ENCODE measurements at regions of chr12 and their contacts with region 1.

Region 1: DNA sequence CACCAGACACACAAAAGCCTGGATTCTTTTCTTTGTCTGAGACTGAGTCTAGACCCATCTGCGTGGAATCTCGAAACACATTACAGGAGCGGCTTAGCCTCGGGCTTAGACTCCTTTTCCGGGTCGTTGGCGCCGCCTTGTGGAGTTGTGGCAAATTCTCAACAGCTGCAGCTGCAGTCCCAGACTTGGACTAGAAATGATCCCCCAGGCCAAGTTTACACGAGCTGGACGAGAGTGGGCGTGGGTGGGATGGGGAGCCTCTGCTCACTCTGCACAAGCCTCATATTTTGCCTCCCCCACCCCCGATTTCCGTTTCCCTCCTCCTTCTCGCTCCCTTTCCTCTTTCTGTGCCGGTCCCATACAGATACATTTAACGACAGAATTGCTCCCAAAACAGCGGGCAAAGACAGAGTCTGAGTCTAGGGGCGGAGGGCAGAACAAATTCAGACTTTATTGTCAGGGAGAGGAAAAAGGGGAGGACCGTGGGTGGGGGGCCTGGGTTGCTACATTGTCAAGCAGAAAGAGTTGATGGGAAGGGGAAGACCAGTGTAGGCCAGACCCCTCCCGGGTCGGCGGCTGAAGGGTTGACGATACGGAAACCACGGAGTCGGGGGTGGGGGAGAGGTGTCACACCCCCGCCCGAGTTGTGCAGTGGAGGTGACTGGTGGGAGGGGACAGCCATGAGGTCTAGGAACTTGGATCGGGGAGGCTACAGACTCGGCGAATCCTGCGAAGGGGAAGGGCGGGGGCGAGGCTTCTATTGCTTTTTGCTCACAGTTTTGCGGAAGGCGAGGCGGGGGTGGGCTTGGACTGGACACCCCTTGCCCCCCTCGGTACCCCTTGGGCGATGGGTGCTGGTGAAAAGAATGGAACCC is 4.7 kb upstream of the GPR84 start:
- DNase-seq: peak; percentile 96
- ATAC-seq: peak; percentile 82
- H3K4me3 Mint-ChIP-seq: peak overlapping the region; percentile 4
- H3K27ac Mint-ChIP-seq: no peak overlapping the region
- H3K4me1 Mint-ChIP-seq: peaks cover 41% of the 10 kb centered on the region
- H3K27me3 Mint-ChIP-seq: peaks cover 2% of the 10 kb centered on the region

Region 2: GRCh38 chr12:54220092-54220557 is 148.8 kb before region 1 on chr12:
- CTCF ChIA-PET with region 1: interaction called, 35 read pairs
- POLR2A ChIA-PET with region 1: no interaction called
- intact Hi-C with region 1: loop called (anchors 1 kb)
- DNase-seq: peak; percentile 84
- ATAC-seq: peak; percentile 58
- H3K4me3 Mint-ChIP-seq: no peak overlapping the region
- H3K27ac Mint-ChIP-seq: no peak overlapping the region
- H3K4me1 Mint-ChIP-seq: peaks cover 26% of the 10 kb centered on the region
- H3K27me3 Mint-ChIP-seq: peaks cover 12% of the 10 kb centered on the region

Region 3: DNA sequence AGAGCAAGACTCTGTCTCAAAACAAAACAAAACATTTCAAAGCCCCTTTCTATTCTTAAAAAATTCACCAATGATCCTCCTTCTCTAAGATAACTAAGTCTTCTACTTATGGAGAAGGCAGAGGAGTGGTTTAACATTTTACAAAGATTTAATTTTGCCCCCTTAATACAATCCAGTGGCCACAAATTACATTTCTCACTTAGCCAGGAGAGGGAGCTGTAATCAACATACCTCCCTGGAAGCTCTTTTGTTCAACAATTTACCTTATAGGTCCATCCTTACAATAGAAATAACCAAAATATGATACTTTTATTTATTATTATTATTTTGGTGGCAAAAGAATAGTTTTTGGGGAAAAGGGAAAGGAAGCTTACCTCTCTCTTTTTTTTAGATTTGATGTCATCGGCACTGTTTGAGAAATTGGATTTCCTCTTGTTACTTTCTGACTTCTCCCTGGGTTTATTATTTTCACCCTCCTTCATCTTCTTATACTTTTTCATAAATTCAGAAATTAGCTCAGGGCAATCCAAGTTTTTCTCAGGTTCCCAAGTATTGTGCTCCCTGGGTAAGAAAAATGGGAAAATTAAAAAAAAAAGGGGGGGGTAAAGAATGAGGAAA is 117.2 kb before region 1 on chr12:
- CTCF ChIA-PET with region 1: interaction called, 12 read pairs
- POLR2A ChIA-PET with region 1: no interaction called
- intact Hi-C with region 1: loop called in 1 of 2 experiments (anchors 1 kb)
- DNase-seq: no peak
- ATAC-seq: peak; percentile 75
- H3K4me3 Mint-ChIP-seq: no peak overlapping the region
- H3K27ac Mint-ChIP-seq: no peak overlapping the region
- H3K4me1 Mint-ChIP-seq: peaks cover 10% of the 10 kb centered on the region
- H3K27me3 Mint-ChIP-seq: no peaks in the 10 kb centered on the region

Region 4: GRCh38 chr12:54294152-54294952 is 74.6 kb before region 1 on chr12:
- CTCF ChIA-PET with region 1: interaction called, 83 read pairs
- POLR2A ChIA-PET with region 1: interaction called, 3 read pairs
- intact Hi-C with region 1: loop called (anchors 1 kb)
- DNase-seq: peak; percentile 83
- ATAC-seq: peak; percentile 82
- H3K4me3 Mint-ChIP-seq: no peak overlapping the region
- H3K27ac Mint-ChIP-seq: no peak overlapping the region
- H3K4me1 Mint-ChIP-seq: peaks cover 5% of the 10 kb centered on the region
- H3K27me3 Mint-ChIP-seq: peaks cover 10% of the 10 kb centered on the region

Region 5: GRCh38 chr12:54306925-54307741 is 61.8 kb before region 1 on chr12:
- CTCF ChIA-PET with region 1: interaction called, 10 read pairs
- POLR2A ChIA-PET with region 1: interaction called, 3 read pairs
- intact Hi-C with region 1: no loop called
- DNase-seq: peak; percentile 53
- ATAC-seq: peak; percentile 58
- H3K4me3 Mint-ChIP-seq: no peak overlapping the region
- H3K27ac Mint-ChIP-seq: no peak overlapping the region
- H3K4me1 Mint-ChIP-seq: peaks cover 6% of the 10 kb centered on the region
- H3K27me3 Mint-ChIP-seq: peaks cover 28% of the 10 kb centered on the region

Region 6: GRCh38 chr12:54337280-54337842 is 31.6 kb before region 1 on chr12:
- CTCF ChIA-PET with region 1: interaction called, 46 read pairs
- POLR2A ChIA-PET with region 1: no interaction called
- intact Hi-C with region 1: loop called (anchors 1 to 2 kb)
- DNase-seq: no peak
- ATAC-seq: no peak
- H3K4me3 Mint-ChIP-seq: no peak overlapping the region
- H3K27ac Mint-ChIP-seq: no peak overlapping the region
- H3K4me1 Mint-ChIP-seq: peaks cover 13% of the 10 kb centered on the region
- H3K27me3 Mint-ChIP-seq: no peaks in the 10 kb centered on the region

Region 7: GRCh38 chr12:54439521-54440255 is 70.7 kb after region 1 on chr12:
- CTCF ChIA-PET with region 1: interaction called, 13 read pairs
- POLR2A ChIA-PET with region 1: no interaction called
- intact Hi-C with region 1: no loop called
- DNase-seq: no peak
- ATAC-seq: peak; percentile 85
- H3K4me3 Mint-ChIP-seq: no peak overlapping the region
- H3K27ac Mint-ChIP-seq: no peak overlapping the region
- H3K4me1 Mint-ChIP-seq: peaks cover 9% of the 10 kb centered on the region
- H3K27me3 Mint-ChIP-seq: no peaks in the 10 kb centered on the region

Region 8: DNA sequence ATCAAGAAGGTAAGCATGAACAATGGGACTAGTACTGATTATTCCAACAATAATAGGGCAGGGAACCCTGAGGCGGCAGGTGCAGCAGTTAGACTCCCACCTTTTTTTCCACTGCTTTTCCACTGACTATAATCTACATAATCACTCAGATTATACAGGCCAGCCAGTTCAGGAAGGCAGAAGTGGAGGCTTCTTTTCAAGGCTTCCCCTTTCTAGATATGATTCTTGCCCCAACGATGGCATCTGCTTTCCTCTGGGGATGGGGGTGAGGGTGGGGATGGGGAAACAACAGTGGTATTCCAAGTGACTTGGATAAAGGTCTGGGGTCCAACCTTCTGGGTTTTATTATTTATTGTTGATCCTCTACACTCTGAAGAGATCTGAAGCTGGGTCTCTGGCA is 128.9 kb after region 1 on chr12:
- CTCF ChIA-PET with region 1: no interaction called
- POLR2A ChIA-PET with region 1: no interaction called
- intact Hi-C with region 1: no loop called
- DNase-seq: no peak
- ATAC-seq: peak; percentile 4
- H3K4me3 Mint-ChIP-seq: peak overlapping the region; percentile 99
- H3K27ac Mint-ChIP-seq: peak overlapping the region; percentile 98
- H3K4me1 Mint-ChIP-seq: peaks cover 39% of the 10 kb centered on the region
- H3K27me3 Mint-ChIP-seq: no peaks in the 10 kb centered on the region

Region 9: GRCh38 chr12:54588110-54588889 is 219.4 kb after region 1 on chr12 and contains the start of gene PPP1R1A:
- CTCF ChIA-PET with region 1: no interaction called
- POLR2A ChIA-PET with region 1: no interaction called
- intact Hi-C with region 1: no loop called
- DNase-seq: peak; percentile 22
- ATAC-seq: peak; percentile 20
- H3K4me3 Mint-ChIP-seq: peak within 1 kb of the TSS; percentile 40
- H3K27ac Mint-ChIP-seq: no peak within 1 kb of the TSS
- H3K4me1 Mint-ChIP-seq: peaks cover 7% of the 10 kb centered on the region
- H3K27me3 Mint-ChIP-seq: peaks cover 43% of the 10 kb centered on the region
- total RNA-seq, gene PPP1R1A: not detected

Measured in activated CD4-positive, alpha-beta T cell treated with anti-CD3 and anti-CD28 coated beads for 36 hours (primary cell).